Posterior cingulate gyrus (tissue), 11 donors: ENCODE measurements at regions of chr7 and their contacts with region 1.

Region 1: GRCh38 chr7:135211179-135211945 is at the start of gene WDR91:
- DNase-seq: peak; percentile 94 to 99 (median 97)

Region 2: DNA sequence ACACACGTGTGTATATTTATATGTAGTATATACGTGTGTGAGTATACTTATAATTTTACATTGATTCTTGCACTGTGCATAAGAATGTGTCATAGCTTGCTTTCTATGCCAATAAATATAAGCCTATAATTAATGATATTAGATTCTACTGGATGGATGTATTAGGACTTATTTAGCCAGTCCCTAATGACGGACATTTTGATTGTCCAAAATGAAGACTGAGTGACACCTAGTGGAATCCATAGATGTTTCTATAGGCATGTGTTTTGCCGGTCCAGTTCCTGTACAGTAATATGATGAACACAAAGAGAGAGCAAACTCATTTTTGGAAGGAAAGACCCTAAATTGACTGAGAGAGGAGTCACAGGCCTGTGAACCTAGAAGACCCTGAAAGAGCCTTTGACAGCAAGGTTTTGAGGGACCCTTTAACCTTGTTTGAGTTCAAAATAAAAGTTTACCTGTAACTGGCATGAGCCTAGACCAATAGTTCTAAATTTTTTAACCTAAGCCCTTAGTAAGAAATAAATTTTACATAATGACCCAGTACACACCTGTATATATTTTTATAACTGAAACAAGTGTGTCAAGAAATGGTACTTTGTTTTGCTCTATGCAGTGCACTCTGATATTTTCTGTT is 267.5 kb before region 1 on chr7:
- intact Hi-C with region 1: no loop called
- DNase-seq: no peak

Region 3: DNA sequence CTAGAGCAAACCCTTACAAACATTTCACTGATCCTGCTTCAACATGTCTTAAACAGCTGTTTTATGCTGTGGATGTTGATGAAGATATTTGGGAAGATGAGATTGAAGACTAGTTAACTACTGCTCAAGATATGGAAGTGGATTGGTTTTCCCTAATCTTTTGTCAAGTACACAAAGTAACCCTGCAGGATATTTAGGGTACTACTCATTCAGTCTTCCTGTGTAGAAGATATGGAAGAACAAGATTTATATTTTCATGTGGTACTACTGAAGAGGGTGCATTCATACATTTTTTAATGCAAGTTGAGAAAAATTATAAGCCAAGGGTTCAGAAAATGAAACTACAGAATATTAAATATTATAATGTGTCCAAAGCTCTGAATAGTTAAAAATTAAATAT is 81.8 kb before region 1 on chr7:
- intact Hi-C with region 1: no loop called
- DNase-seq: no peak

Region 4: DNA sequence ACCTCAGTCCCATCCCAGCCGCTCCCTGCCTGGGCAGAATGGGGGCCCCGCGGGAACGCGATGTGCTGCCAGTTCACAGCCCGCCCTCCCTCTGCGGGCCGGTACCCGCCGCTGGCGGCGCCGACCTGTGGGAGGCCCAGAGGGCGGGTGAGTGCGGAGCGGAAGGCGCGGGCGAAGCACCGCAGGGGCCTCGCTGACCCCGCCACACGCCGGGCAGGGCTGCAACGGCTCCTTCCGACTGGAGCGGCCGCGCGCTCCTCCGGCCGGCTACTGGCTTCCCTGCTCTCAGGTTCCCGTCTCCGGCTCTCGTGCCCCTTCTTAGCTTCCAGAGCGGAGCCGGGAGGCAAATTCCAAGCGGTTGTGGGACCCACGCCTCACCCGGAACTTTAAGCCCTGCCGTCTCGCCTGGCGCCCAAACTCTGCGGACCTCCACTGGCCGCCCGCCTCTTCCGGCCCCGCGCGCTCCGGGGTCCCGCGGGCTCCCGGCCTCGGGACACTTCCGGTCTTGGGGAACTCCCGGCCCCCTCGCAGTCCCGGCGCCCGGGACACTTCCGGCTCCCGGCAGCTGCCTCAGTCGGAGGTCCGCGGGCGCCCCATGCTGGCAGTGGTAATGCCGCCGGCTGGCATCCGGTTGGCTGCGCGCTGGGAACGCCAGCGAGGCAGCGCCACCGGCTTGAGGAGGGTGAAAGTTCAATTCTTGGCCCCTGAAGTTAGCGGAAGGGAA is 40.9 kb before region 1 on chr7 and contains the start of gene CYREN:
- intact Hi-C with region 1: loop called (anchors 2 kb)
- DNase-seq: peak; percentile 87 to 98 (median 92)

Region 5: DNA sequence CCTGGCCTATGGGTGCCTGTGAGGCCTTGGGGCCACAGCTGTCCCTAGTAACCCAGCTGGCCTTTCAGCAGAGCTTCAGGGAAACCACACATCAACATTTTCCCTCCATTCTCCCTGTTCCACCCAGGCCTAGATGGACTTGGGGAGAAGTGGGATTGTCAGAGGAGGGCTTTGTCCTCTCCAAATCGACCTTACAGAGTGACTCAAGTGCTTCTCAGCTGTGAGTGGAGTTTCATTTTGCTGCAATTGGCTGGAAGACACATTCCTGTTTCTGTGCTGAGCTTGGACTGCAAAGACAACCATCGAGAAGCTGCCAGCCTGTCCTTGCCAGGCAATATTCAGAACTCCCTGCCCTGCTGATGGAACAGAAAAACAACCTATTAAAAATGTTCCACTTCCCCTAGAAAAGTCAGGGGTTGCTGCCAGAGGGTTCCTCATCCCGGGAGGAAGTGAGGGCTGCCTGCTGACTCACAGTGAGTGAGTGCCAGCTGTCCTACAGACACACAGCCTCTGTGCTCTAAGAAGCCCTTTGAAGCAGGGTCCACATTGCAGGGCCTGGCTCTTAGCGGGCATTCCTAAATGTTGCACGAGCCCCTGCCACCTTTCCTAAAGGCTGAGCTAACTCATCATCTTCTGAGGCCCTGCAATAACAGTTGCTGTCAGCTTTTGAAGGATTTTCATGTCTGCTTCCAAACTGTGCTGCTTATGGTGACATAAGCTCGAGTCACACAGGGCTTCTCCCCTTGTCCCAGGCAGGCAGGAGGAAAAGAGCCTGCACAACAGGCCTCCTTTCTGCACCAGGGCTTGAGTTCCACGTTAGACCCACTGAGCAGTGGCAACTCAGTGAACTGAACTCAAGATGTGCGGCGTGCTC is 42.8 kb after region 1 on chr7:
- intact Hi-C with region 1: loop called (anchors 5 kb)
- DNase-seq: peak; percentile 64 to 96 (median 75)

Region 6: DNA sequence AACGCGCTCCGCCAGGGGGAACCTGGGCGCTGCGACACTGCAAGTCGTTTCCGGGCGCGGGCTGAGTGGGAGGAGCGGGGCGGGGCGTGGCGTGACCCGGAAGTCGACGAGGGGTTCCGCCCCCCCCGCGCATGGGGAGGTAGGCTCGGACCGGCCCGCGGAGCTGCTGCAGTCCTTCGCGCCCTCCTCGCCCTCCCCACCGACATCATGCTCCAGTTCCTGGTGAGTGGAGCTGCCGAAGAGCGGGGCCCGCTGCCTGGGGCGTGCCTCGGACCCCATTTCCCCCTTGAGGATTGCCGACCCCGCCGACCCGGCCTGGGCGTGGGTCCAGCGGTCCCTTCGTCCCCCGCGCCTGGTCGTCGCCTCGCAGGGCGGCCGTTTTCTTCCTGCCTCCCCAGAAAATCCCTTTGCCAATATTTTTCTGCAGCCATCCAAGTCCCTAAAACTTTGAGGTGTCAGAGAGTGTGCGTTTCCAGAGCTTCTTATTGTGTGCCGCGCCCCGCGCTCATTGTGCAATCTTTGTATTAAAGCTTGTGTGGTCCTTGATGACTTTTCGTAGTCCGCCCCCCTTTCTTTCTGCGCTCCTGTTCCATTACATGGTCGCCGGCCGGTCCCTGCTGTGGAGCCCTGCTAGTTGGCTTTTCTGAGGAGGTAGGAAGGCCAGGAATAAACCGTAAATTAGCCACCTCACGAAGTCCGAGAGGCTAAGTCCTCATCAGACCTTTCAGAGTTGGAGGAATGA is 451.2 kb after region 1 on chr7 and contains the start of gene STMP1:
- intact Hi-C with region 1: loop called (anchors 5 kb)
- DNase-seq: peak; percentile 91 to 99 (median 95)